ENCODE measurements at regions of chr1 and their contacts with region 1.

Region 1: GRCh38 chr1:198681831-198682759 is 43.3 kb downstream of the PTPRC start:
- DNase-seq: peak; percentile 68 to 84
- H3K4me3 ChIP-seq: no peak overlapping the region
- H3K4me1 ChIP-seq: peaks cover 16% of the 10 kb centered on the region
- H3K27me3 ChIP-seq: no peaks in the 10 kb centered on the region

Region 2: GRCh38 chr1:197526736-197527371 is 1155.2 kb before region 1 on chr1:
- in situ Hi-C with region 1: loop called (anchors 25 kb)
- DNase-seq: peak in 1 of 2 experiments; percentile 47
- H3K4me3 ChIP-seq: no peak overlapping the region
- H3K4me1 ChIP-seq: no peaks in the 10 kb centered on the region
- H3K27me3 ChIP-seq: no peaks in the 10 kb centered on the region

Measured in HAP-1 (cell line).